ENCODE measurements at regions of chr1 and their contacts with region 1.

Region 1: DNA sequence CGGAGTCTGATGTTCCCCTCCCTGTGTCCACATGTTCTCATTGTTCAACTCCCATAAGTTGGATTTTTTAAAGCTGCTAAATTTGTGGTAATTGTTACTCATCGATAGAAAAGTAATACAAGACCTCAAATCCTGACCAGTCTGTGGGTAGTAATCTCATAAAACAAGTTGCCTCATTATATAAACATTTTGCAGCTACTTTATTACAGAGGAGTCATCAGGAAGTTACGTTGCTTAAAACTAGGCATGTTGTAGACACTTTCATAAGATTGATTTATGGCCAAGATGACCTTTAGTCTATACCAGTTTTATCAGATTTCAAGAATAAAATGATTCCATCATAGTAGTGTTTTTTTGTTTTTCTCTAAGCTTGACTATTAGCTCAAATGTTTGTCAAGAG is 208.8 kb downstream of the GIPC2 start:
- DNase-seq: no peak
- H3K4me3 Mint-ChIP-seq: no peak overlapping the region
- H3K27ac Mint-ChIP-seq: no peak overlapping the region
- H3K4me1 Mint-ChIP-seq: no peaks in the 10 kb centered on the region
- H3K27me3 Mint-ChIP-seq: no peaks in the 10 kb centered on the region
- CTCF ChIP-seq: no peak

Region 2: GRCh38 chr1:78237364-78237916 is 17.1 kb before region 1 on chr1:
- CTCF ChIA-PET with region 1: interaction called, 12 read pairs
- intact Hi-C with region 1: no loop called
- DNase-seq: peak; percentile 75
- H3K4me3 Mint-ChIP-seq: peak overlapping the region; percentile 31
- H3K27ac Mint-ChIP-seq: peak overlapping the region; percentile 69
- H3K4me1 Mint-ChIP-seq: peaks cover 29% of the 10 kb centered on the region
- H3K27me3 Mint-ChIP-seq: no peaks in the 10 kb centered on the region
- CTCF ChIP-seq: no peak

Region 3: DNA sequence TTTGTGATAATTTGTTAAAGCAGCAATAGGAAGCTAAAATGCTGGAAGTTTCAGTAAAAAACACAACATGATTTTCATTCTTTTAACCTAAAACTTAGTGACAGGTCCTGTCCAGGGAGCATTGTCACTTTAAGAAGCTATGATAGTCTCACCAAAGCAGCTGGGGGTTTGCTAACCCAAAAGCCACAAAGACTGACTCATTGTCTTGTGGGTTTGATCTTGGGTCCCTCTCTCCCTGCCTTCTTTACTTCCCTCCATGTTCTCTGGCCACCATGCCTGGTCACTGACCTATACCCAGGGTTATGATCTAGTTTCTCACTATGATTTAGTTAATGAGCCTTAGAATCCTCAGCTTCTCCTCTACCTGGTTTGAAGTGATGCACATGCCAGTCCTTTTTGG is 22.7 kb after region 1 on chr1:
- CTCF ChIA-PET with region 1: no interaction called
- intact Hi-C with region 1: no loop called
- DNase-seq: peak; percentile 7
- H3K4me3 Mint-ChIP-seq: no peak overlapping the region
- H3K27ac Mint-ChIP-seq: no peak overlapping the region
- H3K4me1 Mint-ChIP-seq: peaks cover 18% of the 10 kb centered on the region
- H3K27me3 Mint-ChIP-seq: no peaks in the 10 kb centered on the region
- CTCF ChIP-seq: no peak

Measured in Calu3 (cell line).